CD4-positive, alpha-beta memory T cell (primary cell): ENCODE measurements at regions of chr1 and their contacts with region 1.

Region 1: DNA sequence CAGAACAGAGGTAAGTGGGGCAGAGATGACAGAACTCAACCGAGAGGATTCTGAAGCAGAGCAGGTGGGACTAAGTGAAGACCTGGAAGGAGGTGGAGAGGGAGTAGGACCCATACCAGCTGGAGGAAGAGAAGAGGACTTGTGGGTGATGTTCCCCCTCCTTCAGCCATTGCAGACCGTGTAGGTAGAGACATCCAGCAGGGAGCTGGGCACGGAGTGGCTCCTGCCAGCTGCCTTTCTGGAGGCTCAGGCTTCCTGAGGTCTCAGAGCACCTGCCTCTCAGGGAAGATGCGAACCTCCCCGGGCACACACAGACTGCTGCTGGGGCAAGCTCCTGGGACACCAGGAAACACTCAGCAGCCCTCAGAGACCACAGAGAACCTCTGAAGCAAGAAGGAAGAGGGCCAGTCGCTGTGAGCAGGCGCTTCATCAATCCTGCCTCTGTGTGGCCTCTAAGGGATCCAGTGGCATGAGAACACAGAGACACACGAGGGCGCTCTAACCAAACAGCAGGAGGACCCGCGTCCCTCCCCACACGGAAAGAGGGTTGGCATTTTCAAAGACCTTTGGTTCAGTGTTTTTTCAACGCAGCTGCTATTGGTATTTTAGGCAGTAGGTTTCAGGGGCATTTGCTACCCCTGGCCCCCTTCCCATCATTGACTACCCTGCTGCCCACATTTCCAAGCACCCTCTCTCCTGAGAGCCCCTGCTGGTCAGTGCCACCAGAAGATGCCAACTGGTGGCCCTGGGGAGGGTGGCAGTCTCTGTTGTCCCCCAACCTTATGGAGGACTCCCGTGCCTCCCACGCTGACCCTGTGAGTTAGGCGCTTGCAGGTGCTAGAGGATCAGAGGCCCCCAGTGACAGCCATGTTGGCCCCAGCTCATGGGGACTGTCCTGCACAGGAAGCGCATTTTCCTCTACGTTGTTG is 89.6 kb upstream of the EDN2 start:
- DNase-seq: peak; percentile 70 to 79 (median 76)
- H3K4me3 ChIP-seq: no peak overlapping the region
- H3K4me3 Mint-ChIP-seq: no peak overlapping the region
- H3K27ac ChIP-seq: no peak overlapping the region
- H3K27ac Mint-ChIP-seq: peak overlapping the region in 2 of 7 donors; percentile 12 to 31
- H3K4me1 ChIP-seq: peaks cover 5% of the 10 kb centered on the region
- H3K4me1 Mint-ChIP-seq: peaks cover 6 to 15% (median 9%) of the 10 kb centered on the region in 4 donors
- H3K27me3 ChIP-seq: no peaks in the 10 kb centered on the region
- H3K27me3 Mint-ChIP-seq: no peaks in the 10 kb centered on the region

Region 2: GRCh38 chr1:41751804-41752513 is 177.9 kb after region 1 on chr1:
- CTCF ChIA-PET with region 1: interaction called, 3 read pairs
- POLR2A ChIA-PET with region 1: no interaction called
- intact Hi-C with region 1: loop called (anchors 10 kb)
- DNase-seq: no peak
- H3K4me3 ChIP-seq: no peak overlapping the region
- H3K4me3 Mint-ChIP-seq: peak overlapping the region in 4 of 8 donors; percentile 73 to 77 (median 75)
- H3K27ac ChIP-seq: no peak overlapping the region
- H3K27ac Mint-ChIP-seq: peak overlapping the region in 5 of 7 donors; percentile 72 to 92 (median 84)
- H3K4me1 ChIP-seq: peaks cover 44% of the 10 kb centered on the region
- H3K4me1 Mint-ChIP-seq: peaks cover 27 to 54% (median 40%) of the 10 kb centered on the region in 4 donors
- H3K27me3 ChIP-seq: no peaks in the 10 kb centered on the region
- H3K27me3 Mint-ChIP-seq: peaks cover 0 to 1% of the 10 kb centered on the region in 2 donors

Region 3: GRCh38 chr1:41812051-41812450 is 238.0 kb after region 1 on chr1:
- CTCF ChIA-PET with region 1: interaction called, 21 read pairs
- POLR2A ChIA-PET with region 1: no interaction called
- intact Hi-C with region 1: no loop called
- DNase-seq: peak; percentile 49 to 64 (median 60)
- H3K4me3 ChIP-seq: no peak overlapping the region
- H3K4me3 Mint-ChIP-seq: peak overlapping the region in 6 of 8 donors; percentile 12 to 51 (median 39)
- H3K27ac ChIP-seq: no peak overlapping the region
- H3K27ac Mint-ChIP-seq: peak overlapping the region in 4 of 7 donors; percentile 5 to 32 (median 20)
- H3K4me1 ChIP-seq: peaks cover 25% of the 10 kb centered on the region
- H3K4me1 Mint-ChIP-seq: peaks cover 27 to 51% (median 30%) of the 10 kb centered on the region in 4 donors
- H3K27me3 ChIP-seq: no peaks in the 10 kb centered on the region
- H3K27me3 Mint-ChIP-seq: no peaks in the 10 kb centered on the region

Region 4: GRCh38 chr1:41891199-41891896 is 317.3 kb after region 1 on chr1:
- CTCF ChIA-PET with region 1: interaction called, 15 read pairs
- POLR2A ChIA-PET with region 1: no interaction called
- intact Hi-C with region 1: no loop called
- DNase-seq: peak; percentile 75 to 80 (median 77)
- H3K4me3 ChIP-seq: peak overlapping the region; percentile 48 to 73
- H3K4me3 Mint-ChIP-seq: peak overlapping the region; percentile 81 to 95 (median 87)
- H3K27ac ChIP-seq: peak overlapping the region; percentile 74
- H3K27ac Mint-ChIP-seq: peak overlapping the region; percentile 87 to 97 (median 95)
- H3K4me1 ChIP-seq: peaks cover 52% of the 10 kb centered on the region
- H3K4me1 Mint-ChIP-seq: peaks cover 37 to 66% (median 50%) of the 10 kb centered on the region in 4 donors
- H3K27me3 ChIP-seq: no peaks in the 10 kb centered on the region
- H3K27me3 Mint-ChIP-seq: peaks cover 0 to 2% of the 10 kb centered on the region in 2 donors

Region 5: DNA sequence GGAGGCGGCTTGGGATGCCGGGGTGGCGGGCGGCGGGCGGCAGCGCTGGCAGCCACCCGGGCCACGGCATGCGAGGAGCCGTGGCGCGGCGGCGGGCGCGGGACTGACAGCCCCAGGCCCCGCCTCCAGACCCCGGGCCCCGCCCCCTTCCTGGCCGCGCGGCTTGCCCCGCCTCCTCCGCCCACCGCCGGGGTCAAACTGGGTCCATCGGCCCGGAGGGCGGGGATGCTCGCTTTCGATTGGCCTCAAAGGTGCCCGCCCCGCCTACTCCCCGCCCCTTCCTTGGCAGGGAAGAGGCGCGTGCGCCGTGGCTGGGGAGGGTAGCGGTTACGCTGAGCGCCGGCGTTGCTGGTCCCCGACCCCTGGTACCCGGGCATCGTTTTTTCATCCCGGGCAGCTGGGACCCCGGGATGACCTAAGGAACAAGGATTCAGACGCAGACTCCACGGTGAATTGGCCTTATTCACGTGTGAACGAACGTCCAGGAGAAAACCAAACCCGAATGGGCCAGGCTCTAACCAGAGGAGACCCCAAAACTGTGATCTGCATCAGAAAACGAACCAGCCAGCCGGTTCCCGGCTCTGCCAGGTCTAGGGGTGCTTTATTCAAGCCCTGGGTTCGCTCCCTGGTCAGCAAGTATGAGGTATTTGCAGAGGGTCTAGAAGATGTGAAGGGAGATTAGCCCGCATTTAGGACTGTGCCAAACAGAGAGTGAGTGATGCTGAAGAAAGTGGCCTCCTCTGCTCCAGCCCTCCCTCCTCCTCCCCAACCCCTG is 462.0 kb after region 1 on chr1:
- CTCF ChIA-PET with region 1: interaction called, 3 read pairs
- POLR2A ChIA-PET with region 1: no interaction called
- intact Hi-C with region 1: loop called (anchors 10 kb)
- DNase-seq: peak; percentile 95 to 98 (median 96)
- H3K4me3 ChIP-seq: peak overlapping the region; percentile 67 to 71
- H3K4me3 Mint-ChIP-seq: peak overlapping the region; percentile 80 to 85 (median 84)
- H3K27ac ChIP-seq: peak overlapping the region; percentile 40
- H3K27ac Mint-ChIP-seq: peak overlapping the region in 5 of 7 donors; percentile 31 to 85 (median 72)
- H3K4me1 ChIP-seq: peaks cover 39% of the 10 kb centered on the region
- H3K4me1 Mint-ChIP-seq: peaks cover 28 to 47% (median 35%) of the 10 kb centered on the region in 4 donors
- H3K27me3 ChIP-seq: no peaks in the 10 kb centered on the region
- H3K27me3 Mint-ChIP-seq: no peaks in the 10 kb centered on the region

Region 6: GRCh38 chr1:42173155-42173933 is 599.3 kb after region 1 on chr1:
- CTCF ChIA-PET with region 1: interaction called, 60 read pairs
- POLR2A ChIA-PET with region 1: interaction called, 3 read pairs
- intact Hi-C with region 1: no loop called
- DNase-seq: peak; percentile 46 to 60 (median 52)
- H3K4me3 ChIP-seq: no peak overlapping the region
- H3K4me3 Mint-ChIP-seq: no peak overlapping the region
- H3K27ac ChIP-seq: no peak overlapping the region
- H3K27ac Mint-ChIP-seq: peak overlapping the region in 2 of 7 donors; percentile 45 to 55
- H3K4me1 ChIP-seq: no peaks in the 10 kb centered on the region
- H3K4me1 Mint-ChIP-seq: peaks cover 0 to 4% (median 1%) of the 10 kb centered on the region in 4 donors
- H3K27me3 ChIP-seq: no peaks in the 10 kb centered on the region
- H3K27me3 Mint-ChIP-seq: no peaks in the 10 kb centered on the region

Region 7: DNA sequence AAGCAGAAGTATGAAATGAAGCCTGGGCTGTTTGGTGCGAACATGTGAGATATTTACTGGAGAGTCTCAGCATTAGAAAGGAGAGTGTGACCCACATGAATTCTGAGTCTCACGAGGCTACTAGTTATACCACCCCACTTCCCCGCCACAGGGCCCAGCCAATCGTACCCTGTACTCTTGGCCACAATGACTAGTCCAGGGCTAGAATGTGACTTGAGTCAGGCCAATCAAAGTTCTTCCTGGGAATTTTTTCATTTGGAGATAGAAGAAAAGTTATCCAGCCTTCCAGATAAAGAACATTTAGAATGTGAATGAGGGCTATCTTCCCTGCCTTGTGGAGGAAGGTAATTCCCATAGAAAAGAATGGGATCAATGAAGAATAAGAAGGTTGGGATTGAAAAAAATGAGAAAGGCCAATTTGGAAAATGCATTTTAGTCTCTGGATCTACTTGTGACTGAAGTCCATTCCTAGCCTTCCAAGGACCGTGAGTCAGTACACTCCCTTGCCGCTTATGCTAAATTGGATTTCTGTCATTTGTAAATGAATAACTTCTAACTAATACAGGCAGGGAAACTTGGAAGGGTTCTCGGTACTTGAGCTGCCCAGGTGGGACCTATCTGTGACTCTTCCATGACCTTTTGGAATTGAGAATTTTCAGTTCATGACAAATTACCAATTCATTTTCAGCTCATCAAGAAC is 794.2 kb after region 1 on chr1:
- CTCF ChIA-PET with region 1: no interaction called
- POLR2A ChIA-PET with region 1: no interaction called
- intact Hi-C with region 1: no loop called
- DNase-seq: no peak
- H3K4me3 ChIP-seq: no peak overlapping the region
- H3K4me3 Mint-ChIP-seq: no peak overlapping the region
- H3K27ac ChIP-seq: no peak overlapping the region
- H3K27ac Mint-ChIP-seq: no peak overlapping the region
- H3K4me1 ChIP-seq: no peaks in the 10 kb centered on the region
- H3K4me1 Mint-ChIP-seq: no peaks in the 10 kb centered on the region
- H3K27me3 ChIP-seq: no peaks in the 10 kb centered on the region
- H3K27me3 Mint-ChIP-seq: peaks cover 2 to 21% of the 10 kb centered on the region in 2 donors